Activated naive CD4-positive, alpha-beta T cell treated with anti-CD3 and anti-CD28 coated beads, Interleukin-2, amount 10 ng/mL, durations not matched to agents 7 days and 5 days (primary cell): ENCODE measurements at regions of chr3 and their contacts with region 1.

Region 1: GRCh38 chr3:127574880-127575878 is 15.4 kb downstream of the TPRA1 start:
- DNase-seq: peak; percentile 88
- H3K4me3 Mint-ChIP-seq: no peak overlapping the region
- H3K27ac Mint-ChIP-seq: peak overlapping the region; percentile 37
- H3K4me1 Mint-ChIP-seq: peaks cover 7% of the 10 kb centered on the region
- H3K27me3 Mint-ChIP-seq: no peaks in the 10 kb centered on the region

Region 2: DNA sequence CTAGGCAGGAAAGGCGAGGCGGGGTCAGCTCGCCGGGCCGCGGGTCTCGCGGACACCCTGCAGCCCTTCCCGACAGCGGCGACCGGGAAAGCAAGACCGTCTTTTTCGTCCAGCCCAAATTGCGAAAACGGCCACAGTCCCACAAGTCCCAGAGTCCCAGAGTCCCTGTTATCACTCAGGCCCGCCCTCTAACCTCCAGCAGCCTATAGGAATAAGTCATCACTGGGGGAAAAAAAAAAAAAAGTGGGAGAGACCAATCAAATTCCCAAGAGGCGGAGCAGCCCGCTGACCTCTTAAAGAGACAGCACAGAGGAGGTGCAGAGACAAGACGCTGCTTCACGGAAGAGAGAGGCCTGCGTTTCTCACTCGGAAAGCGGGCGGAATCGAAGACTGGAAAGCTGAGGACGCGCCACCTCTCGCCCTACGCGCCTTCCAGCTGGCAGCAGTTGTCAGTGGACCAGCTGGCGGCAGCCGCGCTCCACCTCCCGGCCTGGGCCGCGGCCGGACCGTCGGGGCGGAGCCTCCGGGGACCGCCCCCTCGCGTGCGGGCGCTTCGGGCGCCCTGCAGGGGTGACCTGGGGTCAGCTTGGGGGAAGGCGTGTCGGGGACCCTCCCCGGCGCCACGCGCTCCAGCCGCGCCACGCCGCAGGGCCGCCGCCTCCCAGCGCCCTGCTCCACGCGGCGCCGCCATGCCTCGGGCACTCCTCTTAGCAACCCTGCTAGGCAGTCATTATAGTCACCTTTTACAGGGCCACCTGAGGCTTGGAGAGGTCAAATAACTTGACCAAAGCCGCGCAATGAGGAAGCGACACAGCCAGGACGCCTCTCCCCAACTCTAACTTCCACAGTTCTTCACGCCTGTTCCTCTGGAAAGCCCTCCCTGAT is 15.7 kb after region 1 on chr3 and contains the start of gene TPRA1:
- CTCF ChIA-PET with region 1: interaction called, 16 read pairs
- DNase-seq: peak; percentile 89
- H3K4me3 Mint-ChIP-seq: peak within 1 kb of the TSS; percentile 91
- H3K27ac Mint-ChIP-seq: peak within 1 kb of the TSS; percentile 97
- H3K4me1 Mint-ChIP-seq: peaks cover 29% of the 10 kb centered on the region
- H3K27me3 Mint-ChIP-seq: no peaks in the 10 kb centered on the region

Region 3: DNA sequence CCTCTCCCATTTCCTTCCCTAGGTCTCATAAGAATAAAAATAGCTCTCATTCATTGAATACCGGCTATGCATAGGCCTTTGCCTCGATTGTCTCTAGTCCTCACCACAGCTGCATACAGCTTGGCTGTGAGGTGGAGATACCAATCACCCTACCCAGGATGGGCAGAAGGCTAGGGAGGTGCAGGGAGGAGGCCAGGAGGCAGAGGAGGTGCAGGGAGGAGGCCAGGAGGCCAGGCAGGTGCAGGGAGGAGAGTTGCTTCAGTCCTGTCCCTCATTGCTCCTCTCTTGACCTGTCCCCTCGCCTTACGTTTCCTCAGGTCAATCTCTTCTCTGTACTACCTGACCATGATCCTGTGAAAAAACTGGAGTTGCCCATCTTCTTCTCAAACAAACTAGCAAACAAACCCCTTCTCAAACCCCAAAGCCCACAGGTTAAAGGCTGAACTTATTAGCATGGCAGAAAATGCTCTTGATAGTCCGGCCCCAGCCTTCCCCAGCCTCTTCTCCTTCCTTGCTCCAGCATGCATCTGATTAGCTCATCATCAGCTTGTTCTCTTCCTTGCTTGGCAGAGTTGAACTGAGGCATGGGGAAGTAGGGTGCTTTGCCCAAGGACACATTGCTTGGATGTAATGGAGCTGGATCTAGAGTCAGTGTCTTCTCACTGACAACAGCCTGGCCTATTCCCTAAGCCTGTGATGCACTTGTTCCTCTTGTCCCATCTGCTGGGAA is 69.6 kb after region 1 on chr3:
- CTCF ChIA-PET with region 1: no interaction called
- DNase-seq: no peak
- H3K4me3 Mint-ChIP-seq: no peak overlapping the region
- H3K27ac Mint-ChIP-seq: no peak overlapping the region
- H3K4me1 Mint-ChIP-seq: no peaks in the 10 kb centered on the region
- H3K27me3 Mint-ChIP-seq: peaks cover 7% of the 10 kb centered on the region

Region 4: DNA sequence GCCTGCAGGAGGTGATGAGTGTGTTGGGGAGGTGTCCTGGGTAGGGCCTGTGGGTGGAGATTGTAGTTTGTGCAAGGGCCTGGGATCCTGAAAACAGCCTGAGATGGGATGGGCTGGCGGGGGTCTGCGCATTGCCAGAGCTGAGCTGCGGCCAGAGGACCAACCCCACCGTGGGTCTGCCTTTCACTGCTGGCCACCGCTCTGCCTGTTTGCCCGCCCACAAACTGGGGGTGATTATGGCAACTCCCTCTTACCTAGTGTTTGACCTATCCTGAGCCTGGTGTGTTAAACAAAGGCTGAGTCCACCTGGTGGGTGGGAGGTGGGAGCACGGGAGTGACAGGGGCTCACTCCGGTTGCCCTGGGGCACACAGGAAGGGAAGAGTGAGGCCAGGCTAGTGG is 107.4 kb after region 1 on chr3:
- CTCF ChIA-PET with region 1: no interaction called
- DNase-seq: no peak
- H3K4me3 Mint-ChIP-seq: no peak overlapping the region
- H3K27ac Mint-ChIP-seq: no peak overlapping the region
- H3K4me1 Mint-ChIP-seq: peaks cover 4% of the 10 kb centered on the region
- H3K27me3 Mint-ChIP-seq: peaks cover 5% of the 10 kb centered on the region

Region 5: DNA sequence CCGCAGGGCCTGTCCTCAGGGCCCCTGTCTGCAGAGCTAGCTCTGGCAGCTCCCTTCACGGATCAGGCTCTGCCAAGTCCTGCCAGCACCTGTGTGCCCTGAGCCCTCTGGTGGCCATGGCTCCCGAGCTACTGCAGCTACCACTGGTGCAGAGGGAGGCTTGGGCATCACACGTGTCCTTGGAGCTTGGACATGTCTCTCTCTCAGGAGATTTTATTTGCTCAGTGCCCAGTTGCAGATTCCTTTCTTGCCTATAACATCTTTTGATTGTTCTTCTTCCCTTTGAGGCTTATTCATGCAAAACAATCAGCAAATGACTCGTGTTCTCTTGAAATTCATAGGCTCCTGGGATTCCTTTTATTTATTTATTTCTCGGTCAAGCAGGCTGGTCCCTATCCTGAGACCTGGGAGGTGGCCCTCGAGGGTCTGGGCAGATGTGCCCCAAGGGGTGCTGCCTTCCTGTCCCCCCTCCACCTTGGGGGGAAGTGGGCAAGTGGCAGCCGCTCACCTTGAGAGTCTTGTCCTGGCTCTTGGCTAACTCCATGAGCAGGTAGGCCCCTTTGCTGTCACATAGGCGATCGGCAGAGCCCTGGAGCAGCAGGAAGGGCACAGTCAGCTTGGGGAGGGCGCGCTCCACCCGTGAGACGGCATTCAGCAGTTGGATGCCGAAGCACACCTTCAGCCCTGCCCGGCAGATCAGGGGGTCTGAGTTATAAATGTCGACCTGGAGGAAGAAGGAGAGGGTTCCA is 119.5 kb after region 1 on chr3:
- CTCF ChIA-PET with region 1: interaction called, 12 read pairs
- DNase-seq: peak; percentile 72
- H3K4me3 Mint-ChIP-seq: no peak overlapping the region
- H3K27ac Mint-ChIP-seq: no peak overlapping the region
- H3K4me1 Mint-ChIP-seq: peaks cover 4% of the 10 kb centered on the region
- H3K27me3 Mint-ChIP-seq: peaks cover 4% of the 10 kb centered on the region

Region 6: DNA sequence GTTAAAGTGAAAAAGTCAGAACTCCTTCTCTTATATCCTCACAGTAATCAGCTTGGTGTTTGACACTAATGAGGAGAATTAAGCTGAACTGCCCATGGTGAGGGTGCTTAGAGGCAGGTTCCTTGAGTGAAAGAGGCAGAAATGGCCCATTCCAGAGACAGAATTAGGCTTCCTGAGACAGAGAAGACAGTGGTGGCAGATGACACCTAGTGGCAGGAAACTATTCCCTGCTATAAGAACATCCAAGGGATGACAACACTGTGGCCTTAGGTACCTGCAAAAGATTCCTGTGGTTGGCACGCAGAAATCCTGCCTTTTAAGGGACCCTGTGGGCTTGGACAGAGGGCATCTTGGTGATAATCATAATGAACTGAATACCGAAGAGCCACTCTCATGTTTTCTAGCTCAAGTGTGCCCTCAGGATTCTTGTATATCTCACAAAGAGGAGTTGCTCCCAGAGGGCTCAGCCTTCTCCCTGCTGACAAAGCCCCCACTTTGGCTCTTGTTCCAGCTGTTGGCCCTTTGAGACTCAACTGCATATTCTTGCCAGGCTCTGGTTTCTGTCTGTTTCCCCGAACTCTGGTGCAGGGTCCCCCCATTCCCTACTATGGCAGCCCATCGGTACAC is 395.9 kb after region 1 on chr3:
- CTCF ChIA-PET with region 1: interaction called, 11 read pairs
- DNase-seq: peak; percentile 32
- H3K4me3 Mint-ChIP-seq: no peak overlapping the region
- H3K27ac Mint-ChIP-seq: no peak overlapping the region
- H3K4me1 Mint-ChIP-seq: no peaks in the 10 kb centered on the region
- H3K27me3 Mint-ChIP-seq: peaks cover 42% of the 10 kb centered on the region